Activated CD4-positive, alpha-beta memory T cell treated with anti-CD3 and anti-CD28 coated beads for 36 hours (primary cell): ENCODE measurements at regions of chr10 and their contacts with region 1.

Region 1: DNA sequence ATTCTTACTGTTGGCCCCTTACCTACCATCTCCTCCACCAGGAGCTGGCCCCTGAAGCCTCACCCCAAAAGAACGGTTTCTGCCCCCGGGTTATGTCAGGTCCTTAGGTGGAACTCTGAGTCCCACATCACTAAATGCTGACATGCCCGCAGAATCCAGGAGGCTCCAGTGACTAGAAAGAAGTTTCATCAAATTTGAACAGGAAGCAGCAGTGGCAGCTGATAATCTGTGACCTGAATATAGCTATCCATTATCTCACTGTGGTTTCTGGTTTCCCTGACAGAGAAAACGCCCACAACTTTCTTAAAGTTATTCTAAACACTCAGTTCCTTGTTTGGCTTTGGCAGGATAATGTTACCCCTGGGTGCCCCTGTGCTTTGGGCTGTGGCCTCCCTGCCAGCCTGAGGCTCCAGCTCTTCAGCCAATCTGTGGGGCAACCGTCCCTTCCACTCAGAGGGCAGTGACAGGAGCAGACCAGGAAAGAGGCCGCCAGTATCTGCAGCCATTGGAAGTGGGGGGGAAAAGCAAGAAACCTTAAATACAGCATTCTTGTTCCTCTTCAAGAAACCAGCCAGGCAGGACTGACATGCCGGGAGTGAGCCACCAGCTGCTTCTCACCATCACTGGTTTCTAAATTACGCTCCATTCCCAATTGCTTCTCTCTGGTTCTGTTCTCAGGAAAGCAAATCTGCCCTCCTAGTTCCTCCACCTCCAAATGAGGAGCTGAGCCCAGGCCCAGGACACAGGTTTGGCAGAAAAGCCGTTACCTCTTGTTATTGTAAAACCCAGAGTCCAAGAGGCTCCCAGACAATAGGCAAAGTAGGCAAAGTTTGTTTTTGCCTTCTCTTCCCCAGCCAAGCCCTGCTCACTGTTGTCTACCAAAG is 41.2 kb upstream of the VCL start:
- DNase-seq: peak; percentile 53
- H3K4me3 Mint-ChIP-seq: peak overlapping the region; percentile 26
- H3K27ac Mint-ChIP-seq: peak overlapping the region; percentile 85
- H3K4me1 Mint-ChIP-seq: peaks cover 49% of the 10 kb centered on the region
- H3K27me3 Mint-ChIP-seq: no peaks in the 10 kb centered on the region

Region 2: DNA sequence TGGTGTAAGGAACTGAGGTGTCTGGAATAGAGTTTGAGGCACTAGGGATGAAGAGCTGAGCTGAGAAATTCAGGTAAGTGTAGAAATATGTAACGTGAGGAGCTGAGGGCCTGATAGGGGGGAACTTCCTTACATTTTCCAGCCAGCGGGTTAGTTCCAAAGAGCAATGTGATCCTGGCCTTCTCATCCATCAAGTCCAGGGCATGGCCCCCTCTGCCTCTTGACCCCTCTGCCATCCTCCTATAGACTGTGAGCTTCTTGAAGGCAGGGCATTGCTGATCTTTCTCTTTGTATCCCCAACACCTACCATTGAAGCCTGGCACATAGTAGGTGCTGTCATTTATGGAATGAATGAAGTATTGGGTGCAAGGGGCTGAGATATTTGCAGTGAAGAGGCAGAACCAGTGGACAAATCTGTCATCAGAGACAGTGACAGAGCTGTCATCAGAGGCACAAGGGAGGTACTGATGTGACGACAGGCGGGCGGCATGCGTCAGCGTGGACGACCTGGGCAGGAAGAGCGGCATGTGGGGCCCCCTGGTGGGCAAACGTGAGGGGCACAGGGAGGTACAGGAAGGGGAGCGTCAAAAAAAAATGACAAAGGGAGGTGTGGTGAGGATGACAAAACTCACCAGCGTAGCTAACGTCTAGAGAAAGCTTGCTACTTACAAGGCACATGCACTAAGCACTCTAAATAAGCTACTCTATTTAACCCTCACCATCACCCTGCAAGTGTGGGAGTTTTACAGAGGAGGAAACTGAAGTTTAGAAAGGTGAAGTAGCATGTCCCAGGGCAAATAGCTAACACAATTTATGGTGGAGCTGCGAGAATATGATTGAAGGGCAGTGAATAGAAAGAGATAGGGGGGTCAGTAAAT is 77.2 kb before region 1 on chr10:
- CTCF ChIA-PET with region 1: interaction called, 12 read pairs
- POLR2A ChIA-PET with region 1: interaction called, 3 read pairs
- intact Hi-C with region 1: no loop called
- DNase-seq: peak; percentile 97
- H3K4me3 Mint-ChIP-seq: peak overlapping the region; percentile 6
- H3K27ac Mint-ChIP-seq: no peak overlapping the region
- H3K4me1 Mint-ChIP-seq: peaks cover 27% of the 10 kb centered on the region
- H3K27me3 Mint-ChIP-seq: no peaks in the 10 kb centered on the region

Region 3: GRCh38 chr10:73894245-73894971 is 62.3 kb before region 1 on chr10:
- CTCF ChIA-PET with region 1: interaction called, 53 read pairs
- POLR2A ChIA-PET with region 1: no interaction called
- intact Hi-C with region 1: loop called (anchors 5 kb)
- DNase-seq: peak; percentile 61
- H3K4me3 Mint-ChIP-seq: no peak overlapping the region
- H3K27ac Mint-ChIP-seq: no peak overlapping the region
- H3K4me1 Mint-ChIP-seq: peaks cover 12% of the 10 kb centered on the region
- H3K27me3 Mint-ChIP-seq: no peaks in the 10 kb centered on the region

Region 4: GRCh38 chr10:73946253-73947155 is 10.2 kb before region 1 on chr10:
- CTCF ChIA-PET with region 1: interaction called, 27 read pairs
- POLR2A ChIA-PET with region 1: interaction called, 3 read pairs
- intact Hi-C with region 1: no loop called
- DNase-seq: no peak
- H3K4me3 Mint-ChIP-seq: no peak overlapping the region
- H3K27ac Mint-ChIP-seq: peak overlapping the region; percentile 9
- H3K4me1 Mint-ChIP-seq: no peaks in the 10 kb centered on the region
- H3K27me3 Mint-ChIP-seq: no peaks in the 10 kb centered on the region

Region 5: DNA sequence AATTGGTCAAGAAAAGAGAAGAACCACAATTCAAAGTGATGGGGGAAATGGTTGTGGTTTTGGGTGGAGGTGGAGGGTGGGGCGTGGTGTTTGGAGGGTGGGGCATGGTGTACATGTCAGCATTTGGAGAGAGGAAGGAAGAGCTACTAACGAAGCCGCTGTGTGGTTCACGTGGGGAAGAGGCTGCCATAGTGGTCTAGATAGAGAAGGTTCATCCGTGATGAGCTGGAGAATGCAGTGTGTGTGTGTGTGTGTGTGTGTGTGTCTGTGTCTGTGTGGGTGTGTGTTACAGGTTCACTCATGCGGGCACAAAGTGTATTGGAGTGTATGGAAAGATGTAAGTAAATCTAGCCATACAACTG is 35.1 kb after region 1 on chr10:
- CTCF ChIA-PET with region 1: interaction called, 8 read pairs
- POLR2A ChIA-PET with region 1: interaction called, 5 read pairs
- intact Hi-C with region 1: loop called (anchors 2 kb)
- DNase-seq: peak; percentile 86
- H3K4me3 Mint-ChIP-seq: peak overlapping the region; percentile 2
- H3K27ac Mint-ChIP-seq: peak overlapping the region; percentile 55
- H3K4me1 Mint-ChIP-seq: peaks cover 31% of the 10 kb centered on the region
- H3K27me3 Mint-ChIP-seq: no peaks in the 10 kb centered on the region

Region 6: GRCh38 chr10:74058658-74059057 is 101.9 kb after region 1 on chr10:
- CTCF ChIA-PET with region 1: interaction called, 4 read pairs
- POLR2A ChIA-PET with region 1: no interaction called
- intact Hi-C with region 1: loop called (anchors 2 kb)
- DNase-seq: peak; percentile 38
- H3K4me3 Mint-ChIP-seq: no peak overlapping the region
- H3K27ac Mint-ChIP-seq: peak overlapping the region; percentile 16
- H3K4me1 Mint-ChIP-seq: peaks cover 33% of the 10 kb centered on the region
- H3K27me3 Mint-ChIP-seq: no peaks in the 10 kb centered on the region

Region 7: DNA sequence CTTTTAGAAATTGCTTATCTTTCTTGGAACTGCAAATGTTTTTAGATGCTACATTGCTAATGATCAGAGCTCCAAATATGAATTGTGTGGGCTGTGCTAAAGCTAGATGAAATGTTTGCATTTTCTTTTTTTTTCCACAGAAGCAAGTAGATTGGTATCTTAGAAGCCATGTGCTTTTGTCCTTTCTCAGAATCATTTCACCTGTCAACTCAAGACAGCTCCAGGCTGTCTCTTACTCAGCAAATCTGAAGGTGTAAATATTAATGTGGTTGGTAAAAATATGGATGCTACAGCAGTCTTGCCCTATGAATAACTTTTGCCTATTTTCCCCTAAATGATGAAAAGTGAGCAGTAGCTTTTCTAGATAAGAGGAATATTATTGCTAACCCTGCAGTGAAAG is 152.7 kb after region 1 on chr10:
- CTCF ChIA-PET with region 1: no interaction called
- POLR2A ChIA-PET with region 1: no interaction called
- intact Hi-C with region 1: no loop called
- DNase-seq: no peak
- H3K4me3 Mint-ChIP-seq: no peak overlapping the region
- H3K27ac Mint-ChIP-seq: no peak overlapping the region
- H3K4me1 Mint-ChIP-seq: no peaks in the 10 kb centered on the region
- H3K27me3 Mint-ChIP-seq: no peaks in the 10 kb centered on the region

Region 8: DNA sequence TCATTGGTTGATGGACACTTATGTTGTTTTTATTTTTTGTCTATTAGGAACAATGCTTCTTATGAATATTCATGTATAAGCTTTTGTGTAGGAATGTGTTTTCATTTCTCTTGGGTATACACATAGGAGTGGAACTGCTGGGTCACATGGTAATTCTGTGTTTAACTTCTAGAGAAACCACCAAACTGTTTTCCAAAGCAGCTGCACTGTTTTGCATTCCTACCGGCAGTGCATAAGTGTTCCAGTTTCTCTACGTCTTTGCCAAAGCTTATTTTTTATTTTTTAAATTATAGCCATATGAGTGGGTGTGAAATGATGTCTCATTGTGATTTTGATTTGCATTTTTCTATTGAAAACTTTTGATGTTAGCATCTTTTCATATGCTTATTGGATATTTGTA is 245.6 kb after region 1 on chr10:
- CTCF ChIA-PET with region 1: no interaction called
- POLR2A ChIA-PET with region 1: no interaction called
- intact Hi-C with region 1: no loop called
- DNase-seq: no peak
- H3K4me3 Mint-ChIP-seq: no peak overlapping the region
- H3K27ac Mint-ChIP-seq: no peak overlapping the region
- H3K4me1 Mint-ChIP-seq: peaks cover 3% of the 10 kb centered on the region
- H3K27me3 Mint-ChIP-seq: no peaks in the 10 kb centered on the region

Region 9: GRCh38 chr10:74234569-74234968 is 277.9 kb after region 1 on chr10:
- CTCF ChIA-PET with region 1: no interaction called
- POLR2A ChIA-PET with region 1: no interaction called
- intact Hi-C with region 1: no loop called
- DNase-seq: no peak
- H3K4me3 Mint-ChIP-seq: no peak overlapping the region
- H3K27ac Mint-ChIP-seq: no peak overlapping the region
- H3K4me1 Mint-ChIP-seq: peaks cover 4% of the 10 kb centered on the region
- H3K27me3 Mint-ChIP-seq: no peaks in the 10 kb centered on the region